ENCODE measurements at regions of chr11 and their contacts with region 1.

Region 1: DNA sequence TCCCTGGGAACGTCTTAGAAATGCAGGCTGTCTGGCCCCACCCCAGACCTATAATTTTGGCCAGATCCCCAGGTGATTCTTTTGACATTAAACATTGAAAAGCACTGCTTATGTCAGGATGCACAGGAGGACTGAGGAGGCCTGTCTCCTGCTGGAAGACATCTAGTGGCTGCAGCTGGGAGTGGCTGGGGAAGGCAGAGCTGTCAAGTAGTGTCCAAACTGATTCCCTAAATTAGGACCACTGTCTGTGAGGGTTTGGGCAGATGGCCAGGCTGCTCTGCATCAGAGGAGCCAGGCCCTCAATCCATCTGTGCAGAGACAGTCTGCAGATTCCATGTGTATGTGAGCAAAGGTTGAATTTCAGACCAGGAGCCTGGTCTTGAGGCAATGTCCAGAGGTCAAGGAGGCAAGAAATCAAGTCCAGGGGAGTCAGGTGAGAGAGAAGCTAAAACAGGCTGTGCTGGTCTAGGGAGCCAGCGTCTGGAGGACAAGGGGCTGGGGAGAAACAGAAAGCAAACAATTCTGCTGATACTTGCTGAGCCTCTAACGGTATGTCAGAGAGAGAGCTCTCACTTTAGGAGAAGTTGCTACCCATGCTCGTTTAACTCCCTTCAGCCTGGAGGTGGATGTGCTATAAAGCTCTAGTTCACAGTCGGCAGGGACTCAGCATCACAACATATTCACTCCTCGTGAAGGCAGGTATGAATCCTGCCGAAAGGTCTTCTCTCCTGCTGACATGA is 15.3 kb upstream of the SYTL2 start:
- DNase-seq: no peak
- ATAC-seq: peak; percentile 94
- H3K4me3 ChIP-seq: no peak overlapping the region
- H3K27ac ChIP-seq: no peak overlapping the region
- H3K4me1 ChIP-seq: no peaks in the 10 kb centered on the region
- H3K27me3 ChIP-seq: 0 out of 5 replicates have a peak, but pooled peaks cover 0 to 4% of the 10 kb centered on the region in 2 experiments
- CTCF ChIP-seq: peak; percentile 38; the same call in 1 of the 2 replicates
- EP300 ChIP-seq: no peak
- POLR2A ChIP-seq: no peak
- RAD21 ChIP-seq: no peak

Region 2: GRCh38 chr11:85694386-85694980 is 131.8 kb before region 1 on chr11:
- CTCF ChIA-PET with region 1: no interaction called
- POLR2A ChIA-PET with region 1: no interaction called
- in situ Hi-C with region 1: no loop called
- intact Hi-C with region 1: loop called (anchors 5 kb)
- DNase-seq: peak; percentile 20
- ATAC-seq: no peak
- H3K4me3 ChIP-seq: no peak overlapping the region
- H3K27ac ChIP-seq: no peak overlapping the region
- H3K4me1 ChIP-seq: no peaks in the 10 kb centered on the region
- H3K27me3 ChIP-seq: no peaks in the 10 kb centered on the region
- CTCF ChIP-seq: peak; percentile 55
- EP300 ChIP-seq: no peak
- POLR2A ChIP-seq: no peak
- RAD21 ChIP-seq: no peak

Region 3: GRCh38 chr11:85947431-85948272 is 121.4 kb after region 1 on chr11:
- CTCF ChIA-PET with region 1: no interaction called
- POLR2A ChIA-PET with region 1: no interaction called
- in situ Hi-C with region 1: no loop called
- intact Hi-C with region 1: no loop called
- DNase-seq: no peak
- ATAC-seq: peak; percentile 4; the same call in 1 of the 3 replicates
- H3K4me3 ChIP-seq: no peak overlapping the region
- H3K27ac ChIP-seq: no peak overlapping the region
- H3K4me1 ChIP-seq: peaks cover 62% of the 10 kb centered on the region
- H3K27me3 ChIP-seq: no peaks in the 10 kb centered on the region
- CTCF ChIP-seq: no peak
- EP300 ChIP-seq: no peak
- POLR2A ChIP-seq: no peak
- RAD21 ChIP-seq: no peak